Sigmoid colon (tissue), 7 donors: ENCODE measurements at regions of chr10 and their contacts with region 1.

Region 1: GRCh38 chr10:117442944-117443685 is 67.9 kb upstream of the PDZD8 start:
- DNase-seq: peak; percentile 97
- H3K4me3 ChIP-seq: peak overlapping the region in 1 of 4 donors; percentile 6
- H3K27ac ChIP-seq: peak overlapping the region; percentile 5 to 27 (median 22)
- H3K4me1 ChIP-seq: peaks cover 0 to 22% (median 13%) of the 10 kb centered on the region in 4 donors
- H3K27me3 ChIP-seq: no peaks in the 10 kb centered on the region
- CTCF ChIP-seq: peak; percentile 86 to 88 (median 88)
- EP300 ChIP-seq: peak in 1 of 4 donors; percentile 18
- POLR2A ChIP-seq: no peak

Region 2: DNA sequence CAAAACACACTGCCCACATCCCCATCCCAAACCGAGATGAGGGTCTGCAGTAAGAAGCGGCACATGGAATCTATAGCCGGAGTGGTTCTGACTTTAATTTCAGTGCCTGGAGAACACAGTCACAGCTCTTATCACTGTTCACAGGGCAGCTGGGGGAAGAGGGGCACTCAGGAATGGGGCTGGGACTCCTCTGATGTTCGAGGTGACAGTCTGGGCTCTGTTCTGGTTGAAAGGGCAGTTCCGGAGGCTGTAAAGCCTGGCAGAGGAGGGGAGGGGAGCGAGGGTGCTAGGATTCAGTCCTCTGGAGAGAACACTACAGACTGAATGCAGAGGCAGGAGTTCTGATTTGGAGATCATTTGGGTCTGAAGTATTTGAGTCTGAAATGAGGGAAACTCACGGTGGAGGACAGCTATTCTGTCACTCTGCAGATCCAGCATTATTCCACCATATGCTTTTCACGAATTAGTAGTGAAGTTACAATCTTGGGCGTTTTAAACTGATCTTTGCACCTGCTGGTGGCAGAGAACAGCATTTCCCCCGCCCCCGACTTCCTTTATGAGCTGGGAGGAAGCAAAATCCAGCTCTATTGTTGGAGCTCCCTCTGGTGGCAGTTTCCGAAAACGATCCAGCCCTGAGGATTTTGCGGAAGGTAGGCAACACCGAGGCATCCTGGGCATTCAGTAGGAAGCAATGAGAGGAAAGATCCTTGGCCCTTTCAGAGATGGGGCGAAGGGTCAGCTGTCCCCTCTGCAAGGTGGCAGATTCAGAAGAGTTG is 268.5 kb before region 1 on chr10:
- intact Hi-C with region 1: no loop called
- DNase-seq: peak; percentile 81
- H3K4me3 ChIP-seq: peak overlapping the region; percentile 19 to 39 (median 36)
- H3K27ac ChIP-seq: no peak overlapping the region
- H3K4me1 ChIP-seq: peaks cover 0 to 13% (median 11%) of the 10 kb centered on the region in 4 donors
- H3K27me3 ChIP-seq: peaks cover 0 to 61% (median 39%) of the 10 kb centered on the region in 3 donors
- CTCF ChIP-seq: peak in 3 of 4 experiments; percentile 62 to 80 (median 72)
- EP300 ChIP-seq: no peak
- POLR2A ChIP-seq: no peak

Region 3: GRCh38 chr10:117375360-117376178 is 67.5 kb before region 1 on chr10 and contains the start of gene PDZD8:
- intact Hi-C with region 1: loop called (anchors 5 kb)
- DNase-seq: peak; percentile 97
- H3K4me3 ChIP-seq: peak within 1 kb of the TSS; percentile 69 to 94 (median 85)
- H3K27ac ChIP-seq: peak within 1 kb of the TSS; percentile 89 to 99 (median 96)
- H3K4me1 ChIP-seq: peaks cover 0 to 51% (median 27%) of the 10 kb centered on the region in 4 donors
- H3K27me3 ChIP-seq: no peaks in the 10 kb centered on the region
- CTCF ChIP-seq: no peak
- EP300 ChIP-seq: peak in 1 of 4 donors; percentile 10
- POLR2A ChIP-seq: peak; percentile 80 to 81
- total RNA-seq, gene PDZD8: 25.2 to 34.3 (median 30.7) TPM

Region 4: DNA sequence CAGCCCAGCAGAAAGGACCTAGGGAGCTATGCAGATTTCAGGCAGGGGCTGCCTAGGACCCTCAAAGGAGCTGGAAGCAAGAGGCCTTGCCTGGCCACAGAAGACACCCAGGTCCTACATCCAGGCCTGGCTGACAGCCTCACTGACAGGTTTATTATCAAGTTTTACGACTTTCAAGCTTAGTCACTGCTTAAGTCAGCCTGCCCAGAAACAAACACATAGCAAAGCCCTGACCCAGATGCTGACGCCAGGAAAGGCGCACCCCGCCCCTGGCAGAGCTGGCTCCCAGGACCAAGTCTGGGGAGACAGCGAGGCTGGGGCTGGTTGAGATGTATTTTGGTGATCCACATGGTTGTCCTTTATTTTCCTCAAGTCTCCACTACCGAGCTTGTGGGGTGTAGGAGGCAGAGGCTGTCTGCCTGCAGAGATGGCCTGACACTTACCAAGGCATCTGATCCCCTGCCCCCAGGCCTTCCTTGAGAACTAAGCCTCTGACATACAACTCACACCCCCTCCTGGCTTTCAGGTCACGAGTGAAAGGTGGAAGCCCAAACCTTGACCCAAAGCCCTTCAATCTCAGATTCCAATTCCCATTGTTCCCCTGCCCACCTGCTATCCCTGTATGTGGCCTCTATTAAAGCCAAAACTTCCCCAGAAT is 18.8 kb after region 1 on chr10:
- intact Hi-C with region 1: loop called (anchors 2 kb)
- DNase-seq: peak; percentile 95
- H3K4me3 ChIP-seq: no peak overlapping the region
- H3K27ac ChIP-seq: peak overlapping the region in 3 of 4 donors; percentile 85 to 94 (median 93)
- H3K4me1 ChIP-seq: peaks cover 0 to 52% (median 47%) of the 10 kb centered on the region in 4 donors
- H3K27me3 ChIP-seq: no peaks in the 10 kb centered on the region
- CTCF ChIP-seq: no peak
- EP300 ChIP-seq: peak in 3 of 4 donors; percentile 89 to 94 (median 90)
- POLR2A ChIP-seq: no peak

Region 5: DNA sequence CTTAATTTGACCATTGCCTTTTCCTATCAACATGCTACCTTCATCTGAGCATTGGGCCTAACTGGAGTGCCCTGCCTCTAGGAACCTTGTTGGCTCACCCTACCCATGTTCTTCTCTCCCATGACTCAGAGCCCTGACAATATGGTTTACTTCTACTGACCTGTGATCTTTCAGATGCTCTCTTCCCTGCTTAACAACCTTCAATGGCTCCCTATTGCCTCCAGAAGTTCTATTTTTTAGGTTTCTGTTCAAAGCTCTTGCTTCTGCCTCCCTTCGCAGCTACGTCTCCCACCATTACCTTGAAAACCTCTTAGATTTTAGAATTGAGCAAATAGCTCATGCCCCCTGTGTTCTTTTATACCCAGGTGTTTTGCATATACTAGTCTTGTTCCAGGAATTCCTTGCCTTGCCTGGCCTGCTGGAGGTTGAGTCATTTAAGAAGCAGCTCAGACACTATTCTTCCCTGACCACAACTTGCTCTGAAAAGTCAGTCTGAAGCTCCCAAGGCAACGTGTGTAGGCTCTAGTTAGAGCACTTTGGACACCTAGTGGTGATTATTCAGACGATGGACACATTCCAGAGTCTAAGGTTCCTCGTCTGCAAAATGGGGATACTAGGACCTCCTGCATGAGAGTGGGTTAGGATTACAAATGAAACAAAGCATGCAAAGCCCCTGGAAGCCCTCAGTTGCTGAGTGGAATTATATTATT is 35.0 kb after region 1 on chr10:
- intact Hi-C with region 1: loop called (anchors 5 kb)
- DNase-seq: no peak
- H3K4me3 ChIP-seq: no peak overlapping the region
- H3K27ac ChIP-seq: peak overlapping the region; percentile 47 to 66 (median 57)
- H3K4me1 ChIP-seq: peaks cover 0 to 34% (median 23%) of the 10 kb centered on the region in 4 donors
- H3K27me3 ChIP-seq: no peaks in the 10 kb centered on the region
- CTCF ChIP-seq: peak in 1 of 4 experiments; percentile 19
- EP300 ChIP-seq: no peak
- POLR2A ChIP-seq: no peak

Region 6: DNA sequence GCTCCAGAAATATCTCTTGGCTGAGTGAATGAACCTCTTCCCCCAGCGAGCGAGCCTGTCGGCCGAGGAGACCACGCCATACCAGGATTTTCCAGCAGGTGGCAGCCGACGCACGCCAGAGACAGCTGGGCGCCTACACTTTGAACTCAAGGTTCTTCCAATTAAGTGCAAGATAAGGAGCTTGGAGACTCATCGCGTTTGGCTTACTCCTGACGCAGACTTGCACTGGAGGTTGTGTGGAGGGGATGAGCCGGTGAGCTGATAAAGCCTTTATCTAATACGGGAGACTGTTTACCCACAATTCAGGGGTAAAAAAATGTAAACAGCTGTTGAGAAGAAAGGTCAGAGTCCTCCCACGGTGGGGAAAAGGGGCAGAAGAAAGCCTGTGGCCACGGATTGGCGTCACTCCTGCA is 53.5 kb after region 1 on chr10:
- intact Hi-C with region 1: loop called (anchors 5 kb)
- DNase-seq: peak; percentile 85
- H3K4me3 ChIP-seq: no peak overlapping the region
- H3K27ac ChIP-seq: no peak overlapping the region
- H3K4me1 ChIP-seq: peaks cover 0 to 7% (median 3%) of the 10 kb centered on the region in 4 donors
- H3K27me3 ChIP-seq: no peaks in the 10 kb centered on the region
- CTCF ChIP-seq: peak; percentile 84 to 95 (median 86)
- EP300 ChIP-seq: no peak
- POLR2A ChIP-seq: no peak

Region 7: DNA sequence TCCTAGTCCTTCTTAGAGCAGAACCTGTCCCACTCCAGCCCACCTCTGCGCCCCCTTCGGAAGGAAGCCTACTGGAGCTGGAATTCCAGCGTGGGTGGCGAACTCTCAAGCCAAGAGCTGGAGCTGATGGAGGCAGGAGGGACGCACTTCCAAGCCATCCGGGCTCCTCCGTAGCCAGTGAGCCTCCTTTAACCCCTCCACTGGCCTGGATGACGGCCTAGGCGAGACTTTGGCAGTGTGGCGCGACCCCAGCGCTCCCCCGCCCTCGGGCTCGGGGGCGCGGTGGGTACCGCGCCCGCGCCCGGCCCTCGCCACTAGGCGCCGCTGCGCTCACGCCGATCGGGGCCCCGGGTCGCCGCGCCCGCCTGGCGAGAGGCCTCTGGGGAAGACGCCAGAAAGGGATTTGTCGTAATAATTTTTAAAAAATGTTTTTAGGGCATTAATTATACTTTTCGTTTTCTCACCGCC is 94.4 kb after region 1 on chr10:
- intact Hi-C with region 1: loop called (anchors 5 kb)
- DNase-seq: no peak
- H3K4me3 ChIP-seq: peak overlapping the region in 1 of 4 donors; percentile 16
- H3K27ac ChIP-seq: no peak overlapping the region
- H3K4me1 ChIP-seq: peaks cover 0 to 53% (median 43%) of the 10 kb centered on the region in 4 donors
- H3K27me3 ChIP-seq: peaks cover 67 to 100% (median 97%) of the 10 kb centered on the region in 3 donors
- CTCF ChIP-seq: peak in 2 of 4 experiments; percentile 9 to 77
- EP300 ChIP-seq: no peak
- POLR2A ChIP-seq: no peak

Region 8: GRCh38 chr10:117552156-117552631 is 109.1 kb after region 1 on chr10:
- intact Hi-C with region 1: no loop called
- DNase-seq: no peak
- H3K4me3 ChIP-seq: no peak overlapping the region
- H3K27ac ChIP-seq: no peak overlapping the region
- H3K4me1 ChIP-seq: peaks cover 0 to 23% (median 18%) of the 10 kb centered on the region in 4 donors
- H3K27me3 ChIP-seq: peaks cover 57 to 96% (median 89%) of the 10 kb centered on the region in 3 donors
- CTCF ChIP-seq: no peak
- EP300 ChIP-seq: no peak
- POLR2A ChIP-seq: no peak

Region 9: GRCh38 chr10:118241229-118242137 is 798.4 kb after region 1 on chr10:
- intact Hi-C with region 1: loop called (anchors 5 kb)
- DNase-seq: peak; percentile 88
- H3K4me3 ChIP-seq: no peak overlapping the region
- H3K27ac ChIP-seq: no peak overlapping the region
- H3K4me1 ChIP-seq: peaks cover 0 to 6% (median 0%) of the 10 kb centered on the region in 4 donors
- H3K27me3 ChIP-seq: peaks cover 3 to 81% (median 30%) of the 10 kb centered on the region in 3 donors
- CTCF ChIP-seq: peak; percentile 57 to 92 (median 86)
- EP300 ChIP-seq: no peak
- POLR2A ChIP-seq: no peak